GM10248 (cell line): ENCODE measurements at regions of chr4 and their contacts with region 1.

Region 1: GRCh38 chr4:183483997-183484396 is 20.9 kb upstream of the ING2 start:
- DNase-seq: no peak
- CTCF ChIP-seq: no peak

Region 2: GRCh38 chr4:183471946-183472708 is 11.9 kb before region 1 on chr4:
- CTCF ChIA-PET with region 1: interaction called, 10 read pairs
- POLR2A ChIA-PET with region 1: no interaction called
- DNase-seq: peak; percentile 72
- CTCF ChIP-seq: peak; percentile 85

Region 3: DNA sequence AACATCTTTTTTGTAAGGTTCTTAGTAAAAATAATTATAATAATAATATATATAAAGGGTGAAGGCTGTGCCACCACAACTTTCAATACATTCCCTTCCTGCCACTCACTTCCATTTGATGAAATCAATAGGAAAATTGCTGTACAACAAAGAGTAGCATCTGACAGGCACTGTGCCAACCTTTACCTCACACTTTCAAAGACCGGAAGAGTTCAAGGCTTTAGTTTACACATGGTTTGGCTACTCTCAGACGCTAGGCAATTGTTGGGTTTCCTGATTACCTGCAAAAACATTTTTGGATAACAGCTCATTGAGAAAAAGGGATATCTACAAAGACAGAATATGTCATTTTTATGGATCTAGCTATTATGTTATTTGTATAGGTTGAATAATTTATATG is 15.4 kb after region 1 on chr4:
- CTCF ChIA-PET with region 1: no interaction called
- POLR2A ChIA-PET with region 1: no interaction called
- DNase-seq: no peak
- CTCF ChIP-seq: no peak